ENCODE measurements at regions of chr11 and their contacts with region 1.

Region 1: DNA sequence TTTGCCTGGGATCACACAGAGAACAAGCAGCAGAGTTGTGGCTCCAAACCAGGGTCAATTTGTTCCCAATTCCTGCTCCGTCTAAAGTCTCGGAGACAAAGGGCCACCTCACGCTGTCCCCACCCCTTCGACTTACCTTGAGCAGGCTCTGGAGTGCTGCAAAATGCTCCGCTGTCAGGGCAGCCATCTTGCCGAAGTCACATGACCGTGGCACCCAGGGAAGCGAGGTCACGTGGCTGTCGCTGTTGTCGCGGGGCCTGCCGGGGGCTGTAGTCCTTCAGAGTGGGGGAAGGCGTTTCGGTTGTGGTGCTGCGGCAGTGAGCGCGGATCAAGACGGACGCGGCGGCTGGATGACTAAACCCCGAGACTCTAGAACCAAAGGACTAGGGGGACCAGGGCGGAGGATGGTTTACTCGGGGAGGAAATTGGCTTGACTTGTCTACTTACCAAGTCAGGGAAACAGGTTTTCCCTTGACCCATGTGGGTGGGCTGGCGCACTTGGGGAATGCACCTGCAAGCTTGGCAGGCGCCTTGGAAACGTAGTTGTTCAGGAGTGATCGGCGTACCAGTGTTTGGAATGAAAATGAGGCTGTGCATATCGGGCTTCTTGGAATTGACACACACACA is at the start of gene COMMD9:
- DNase-seq: peak; percentile 98
- ATAC-seq: peak; percentile 98
- H3K4me3 Mint-ChIP-seq: peak within 1 kb of the TSS; percentile 88
- H3K27ac Mint-ChIP-seq: peak within 1 kb of the TSS; percentile 69
- H3K4me1 Mint-ChIP-seq: peaks cover 24% of the 10 kb centered on the region
- H3K27me3 Mint-ChIP-seq: peaks cover 3% of the 10 kb centered on the region
- total RNA-seq, gene COMMD9: 33.2 to 40.0 TPM

Region 2: GRCh38 chr11:36149538-36150242 is 139.6 kb before region 1 on chr11:
- CTCF ChIA-PET with region 1: no interaction called
- DNase-seq: peak; percentile 43
- ATAC-seq: peak; percentile 80
- H3K4me3 Mint-ChIP-seq: no peak overlapping the region
- H3K27ac Mint-ChIP-seq: no peak overlapping the region
- H3K4me1 Mint-ChIP-seq: peaks cover 13% of the 10 kb centered on the region
- H3K27me3 Mint-ChIP-seq: peaks cover 4% of the 10 kb centered on the region

Region 3: GRCh38 chr11:36300651-36301050 is 11.3 kb after region 1 on chr11:
- CTCF ChIA-PET with region 1: interaction called, 10 read pairs
- DNase-seq: no peak
- ATAC-seq: no peak
- H3K4me3 Mint-ChIP-seq: no peak overlapping the region
- H3K27ac Mint-ChIP-seq: no peak overlapping the region
- H3K4me1 Mint-ChIP-seq: no peaks in the 10 kb centered on the region
- H3K27me3 Mint-ChIP-seq: peaks cover 6% of the 10 kb centered on the region

Region 4: DNA sequence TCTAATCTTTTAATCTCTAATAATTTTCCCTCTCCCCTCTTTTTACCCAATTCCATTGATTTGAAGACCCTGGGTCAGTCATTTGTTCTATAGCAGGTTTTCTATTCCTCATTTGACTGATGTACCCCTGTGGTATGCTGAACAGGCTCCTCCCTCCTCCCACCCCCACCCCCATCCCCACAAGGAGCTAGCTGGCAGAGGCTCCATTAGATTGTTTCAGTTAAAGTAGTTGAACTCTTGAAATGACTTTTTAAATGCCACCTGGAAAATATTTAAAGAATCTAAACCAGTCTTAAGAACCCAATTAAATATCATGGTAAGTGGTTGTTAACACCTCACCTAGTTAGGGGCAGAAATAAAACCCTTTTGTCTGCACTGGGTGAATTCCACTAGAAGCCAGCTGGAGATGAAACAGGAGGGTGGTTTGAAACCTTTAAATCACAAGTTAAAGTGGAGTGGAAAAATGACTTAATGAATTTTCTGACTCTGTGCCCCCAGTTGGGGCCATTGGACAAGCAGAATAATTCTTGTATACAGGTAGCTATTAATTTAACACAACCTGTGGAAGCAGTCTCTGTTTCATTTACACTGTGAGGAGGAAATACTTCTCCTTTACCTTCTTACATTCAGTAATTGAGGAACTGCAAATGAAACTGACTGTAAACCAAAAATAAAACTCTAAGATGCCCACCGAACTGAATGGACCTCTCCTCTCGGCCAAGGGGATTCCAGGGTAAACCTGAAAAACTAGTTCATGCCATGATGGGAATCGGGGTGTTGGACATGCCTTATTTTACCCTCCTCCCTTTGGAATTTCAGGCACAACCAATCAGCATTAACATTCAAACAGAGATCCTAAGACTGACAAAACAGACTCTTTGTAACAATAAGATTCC is 37.4 kb after region 1 on chr11:
- CTCF ChIA-PET with region 1: no interaction called
- DNase-seq: no peak
- ATAC-seq: no peak
- H3K4me3 Mint-ChIP-seq: no peak overlapping the region
- H3K27ac Mint-ChIP-seq: no peak overlapping the region
- H3K4me1 Mint-ChIP-seq: no peaks in the 10 kb centered on the region
- H3K27me3 Mint-ChIP-seq: peaks cover 14% of the 10 kb centered on the region

Region 5: DNA sequence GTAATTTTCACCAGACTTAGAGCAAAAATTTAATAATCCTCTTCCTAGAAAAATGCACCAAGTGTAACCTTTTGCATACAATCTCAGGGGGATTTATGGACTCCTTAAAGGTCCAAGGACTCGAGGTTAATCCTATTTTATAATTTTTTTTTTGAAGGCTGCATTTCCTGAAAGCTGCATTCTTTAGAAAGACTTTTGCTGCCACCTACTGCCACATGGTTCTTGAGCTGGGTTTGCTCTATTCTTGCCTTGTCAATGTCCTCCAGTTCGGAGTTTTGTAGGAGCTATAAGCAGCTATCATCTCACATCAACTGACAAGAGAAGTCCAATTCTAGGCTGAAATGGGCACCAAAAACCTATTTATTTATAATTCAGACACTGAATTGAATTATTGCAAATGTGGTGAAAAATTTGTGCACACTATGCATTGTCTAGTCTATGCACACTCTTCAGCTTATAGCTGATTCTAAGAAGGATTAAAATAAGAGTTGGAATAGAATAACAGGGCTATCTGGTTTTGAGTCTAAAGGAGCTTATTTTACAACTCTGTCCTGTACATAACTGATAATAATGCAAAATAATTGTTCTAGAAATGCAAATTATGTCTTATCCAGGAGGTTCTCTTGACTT is 189.5 kb after region 1 on chr11:
- CTCF ChIA-PET with region 1: interaction called, 65 read pairs
- DNase-seq: no peak
- ATAC-seq: no peak
- H3K4me3 Mint-ChIP-seq: no peak overlapping the region
- H3K27ac Mint-ChIP-seq: no peak overlapping the region
- H3K4me1 Mint-ChIP-seq: peaks cover 5% of the 10 kb centered on the region
- H3K27me3 Mint-ChIP-seq: no peaks in the 10 kb centered on the region

Region 6: GRCh38 chr11:36564376-36565030 is 275.2 kb after region 1 on chr11:
- CTCF ChIA-PET with region 1: interaction called, 15 read pairs
- DNase-seq: peak; percentile 61
- ATAC-seq: peak; percentile 68
- H3K4me3 Mint-ChIP-seq: peak overlapping the region; percentile 22
- H3K27ac Mint-ChIP-seq: no peak overlapping the region
- H3K4me1 Mint-ChIP-seq: peaks cover 9% of the 10 kb centered on the region
- H3K27me3 Mint-ChIP-seq: peaks cover 40% of the 10 kb centered on the region

Measured in activated CD8-positive, alpha-beta memory T cell treated with anti-CD3 and anti-CD28 coated beads, Interleukin-2, amount 10 ng/mL, durations not matched to agents 7 days and 5 days (primary cell).